ENCODE measurements at regions of chr11 and their contacts with region 1.

Region 1: DNA sequence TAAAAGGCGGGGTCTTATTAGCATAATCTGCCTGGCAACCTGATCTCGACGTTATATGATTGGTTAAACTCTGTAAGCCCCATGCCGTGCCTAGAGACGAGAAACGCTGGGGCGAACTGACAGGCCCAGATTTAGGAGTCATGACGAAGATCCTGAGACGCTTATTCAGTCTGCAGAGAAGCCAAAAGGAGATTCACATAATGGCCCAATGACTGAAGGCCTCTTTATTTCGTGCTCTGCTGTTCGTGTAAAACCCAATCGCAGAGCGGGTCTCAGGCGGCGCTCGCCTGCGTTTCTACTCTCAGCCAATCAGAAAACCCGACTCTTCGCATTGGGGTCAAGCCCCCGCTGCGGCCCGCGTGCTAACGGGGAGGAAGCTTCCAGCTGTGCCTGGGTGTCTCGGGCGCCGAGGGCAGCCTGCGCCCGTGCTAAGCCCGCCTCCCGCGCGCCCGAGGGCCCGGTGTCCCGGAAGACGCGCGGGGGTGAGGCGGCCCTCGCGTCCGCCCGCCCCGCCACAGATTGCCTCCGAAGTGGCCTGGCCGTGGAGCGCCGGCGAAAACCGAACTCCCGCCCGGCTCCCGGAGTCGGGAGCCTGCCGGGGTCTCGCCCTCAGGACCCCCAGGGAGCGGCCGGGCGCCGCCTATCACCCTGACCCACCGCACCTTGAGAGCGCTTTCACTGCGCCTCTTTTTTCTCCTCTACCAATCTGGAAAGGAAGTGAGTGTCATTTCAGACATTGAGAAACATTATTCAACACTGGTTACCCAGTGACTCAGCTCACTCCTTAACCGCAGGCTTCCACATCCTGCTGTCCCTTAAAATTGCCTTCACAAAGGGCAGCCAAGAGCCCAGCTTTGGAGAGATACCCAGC is 446 bp upstream of the PRDM10 start:
- DNase-seq: peak; percentile 89
- H3K4me3 Mint-ChIP-seq: peak overlapping the region; percentile 98
- H3K27ac Mint-ChIP-seq: peak overlapping the region; percentile 100
- H3K4me1 Mint-ChIP-seq: peaks cover 33% of the 10 kb centered on the region
- H3K27me3 Mint-ChIP-seq: peaks cover 7% of the 10 kb centered on the region

Region 2: DNA sequence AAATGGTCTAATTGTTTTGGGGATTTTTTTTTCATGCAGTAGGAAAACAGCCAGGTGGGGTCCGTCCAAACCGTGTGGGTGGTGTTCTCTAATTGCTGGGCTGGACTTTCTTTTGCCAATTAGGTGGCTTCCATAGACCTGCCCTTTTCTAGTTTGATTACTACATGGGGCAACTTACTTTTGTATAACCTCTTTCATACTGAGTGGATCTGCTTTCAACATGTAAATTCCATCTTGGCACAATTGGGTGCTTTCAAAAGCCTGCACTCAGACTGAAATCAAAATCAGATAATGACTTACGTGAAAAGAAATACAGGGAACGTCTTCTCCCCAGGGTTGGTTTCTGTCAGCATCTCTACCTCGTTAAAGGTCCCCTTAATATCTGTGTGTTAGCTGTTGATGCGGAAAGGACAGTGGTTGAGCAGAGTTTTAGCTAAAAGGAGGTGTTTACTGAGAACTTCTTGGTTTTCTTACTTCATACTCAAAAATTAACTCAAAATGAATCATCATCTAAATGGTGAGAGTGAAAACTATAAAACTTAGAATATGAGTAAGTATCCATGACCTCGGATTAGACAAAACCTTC is 555.3 kb before region 1 on chr11:
- intact Hi-C with region 1: loop called (anchors 2 kb)
- DNase-seq: no peak
- H3K4me3 Mint-ChIP-seq: no peak overlapping the region
- H3K27ac Mint-ChIP-seq: peak overlapping the region; percentile 66
- H3K4me1 Mint-ChIP-seq: peaks cover 32% of the 10 kb centered on the region
- H3K27me3 Mint-ChIP-seq: peaks cover 2% of the 10 kb centered on the region

Region 3: GRCh38 chr11:129895126-129896041 is 107.7 kb before region 1 on chr11 and contains the start of gene NFRKB:
- intact Hi-C with region 1: loop called (anchors 1 kb)
- DNase-seq: peak; percentile 84
- H3K4me3 Mint-ChIP-seq: peak within 1 kb of the TSS; percentile 92
- H3K27ac Mint-ChIP-seq: peak within 1 kb of the TSS; percentile 84
- H3K4me1 Mint-ChIP-seq: peaks cover 41% of the 10 kb centered on the region
- H3K27me3 Mint-ChIP-seq: peaks cover 5% of the 10 kb centered on the region
- total RNA-seq, gene NFRKB: 46.8 and 48.5 TPM in 2 replicates

Region 4: DNA sequence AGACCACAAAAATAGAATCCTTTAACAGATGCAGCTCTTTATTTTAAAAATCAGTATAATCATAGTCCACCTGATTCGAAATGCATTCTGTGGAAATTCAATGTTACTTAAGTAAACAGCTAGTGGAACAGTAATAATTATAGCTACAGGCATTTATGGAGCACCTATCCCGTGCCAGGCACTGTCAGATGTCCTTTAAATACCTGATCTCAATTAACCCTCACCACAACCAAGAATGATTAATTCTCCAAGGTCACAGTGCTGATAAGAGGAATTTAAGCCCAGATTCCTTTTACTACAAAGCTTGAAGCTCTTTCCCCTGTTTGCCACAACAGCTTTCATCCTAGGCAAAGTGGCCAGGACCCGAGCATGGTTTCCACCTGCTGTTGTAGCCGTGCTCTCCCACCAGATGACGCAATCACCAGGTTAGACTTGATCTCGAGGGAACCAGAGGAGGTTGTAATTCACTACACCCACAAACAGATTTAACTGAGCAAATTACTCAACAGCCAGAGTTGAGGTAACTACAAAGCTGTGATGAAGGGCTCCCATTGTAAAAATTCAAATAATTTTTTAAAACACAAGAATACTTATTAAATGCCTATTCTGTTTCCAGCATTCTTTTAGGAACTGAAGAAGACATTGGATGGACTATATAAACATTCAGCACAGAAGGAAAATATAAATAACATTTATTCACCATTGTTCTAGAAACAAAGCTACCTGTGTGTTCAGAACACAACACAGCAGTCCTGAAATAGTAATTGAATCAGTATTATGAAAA is 10.7 kb before region 1 on chr11:
- intact Hi-C with region 1: loop called (anchors 1 kb)
- DNase-seq: no peak
- H3K4me3 Mint-ChIP-seq: no peak overlapping the region
- H3K27ac Mint-ChIP-seq: no peak overlapping the region
- H3K4me1 Mint-ChIP-seq: no peaks in the 10 kb centered on the region
- H3K27me3 Mint-ChIP-seq: no peaks in the 10 kb centered on the region

Region 5: GRCh38 chr11:130022798-130023583 is 19.9 kb after region 1 on chr11:
- intact Hi-C with region 1: no loop called
- DNase-seq: no peak
- H3K4me3 Mint-ChIP-seq: no peak overlapping the region
- H3K27ac Mint-ChIP-seq: no peak overlapping the region
- H3K4me1 Mint-ChIP-seq: no peaks in the 10 kb centered on the region
- H3K27me3 Mint-ChIP-seq: peaks cover 8% of the 10 kb centered on the region

Region 6: GRCh38 chr11:130314750-130315285 is 311.7 kb after region 1 on chr11 and contains the start of gene ZBTB44:
- intact Hi-C with region 1: loop called (anchors 1 kb)
- DNase-seq: peak; percentile 82
- H3K4me3 Mint-ChIP-seq: peak within 1 kb of the TSS; percentile 93
- H3K27ac Mint-ChIP-seq: peak within 1 kb of the TSS; percentile 95
- H3K4me1 Mint-ChIP-seq: peaks cover 44% of the 10 kb centered on the region
- H3K27me3 Mint-ChIP-seq: peaks cover 3% of the 10 kb centered on the region
- total RNA-seq, gene ZBTB44: 32.9 and 33.0 TPM in 2 replicates